Activated CD8-positive, alpha-beta T cell treated with anti-CD3 and anti-CD28 coated beads, Interleukin-2, amount 10 ng/mL, durations not matched to agents 7 days and 5 days (primary cell): ENCODE measurements at regions of chr16 and their contacts with region 1.

Region 1: GRCh38 chr16:84672276-84673202 is 24.2 kb downstream of the KLHL36 start:
- DNase-seq: peak; percentile 84
- ATAC-seq: peak; percentile 94
- H3K4me3 Mint-ChIP-seq: no peak overlapping the region
- H3K27ac Mint-ChIP-seq: no peak overlapping the region
- H3K4me1 Mint-ChIP-seq: peaks cover 10% of the 10 kb centered on the region
- H3K27me3 Mint-ChIP-seq: peaks cover 11% of the 10 kb centered on the region

Region 2: GRCh38 chr16:84647828-84648594 is 24.5 kb before region 1 on chr16 and contains the start of gene KLHL36:
- CTCF ChIA-PET with region 1: interaction called, 16 read pairs
- POLR2A ChIA-PET with region 1: interaction called, 5 read pairs
- DNase-seq: peak; percentile 66
- ATAC-seq: peak; percentile 84
- H3K4me3 Mint-ChIP-seq: peak within 1 kb of the TSS; percentile 72
- H3K27ac Mint-ChIP-seq: peak within 1 kb of the TSS; percentile 71
- H3K4me1 Mint-ChIP-seq: peaks cover 40% of the 10 kb centered on the region
- H3K27me3 Mint-ChIP-seq: peaks cover 19% of the 10 kb centered on the region
- total RNA-seq, gene KLHL36: 31.4 to 32.6 TPM

Region 3: DNA sequence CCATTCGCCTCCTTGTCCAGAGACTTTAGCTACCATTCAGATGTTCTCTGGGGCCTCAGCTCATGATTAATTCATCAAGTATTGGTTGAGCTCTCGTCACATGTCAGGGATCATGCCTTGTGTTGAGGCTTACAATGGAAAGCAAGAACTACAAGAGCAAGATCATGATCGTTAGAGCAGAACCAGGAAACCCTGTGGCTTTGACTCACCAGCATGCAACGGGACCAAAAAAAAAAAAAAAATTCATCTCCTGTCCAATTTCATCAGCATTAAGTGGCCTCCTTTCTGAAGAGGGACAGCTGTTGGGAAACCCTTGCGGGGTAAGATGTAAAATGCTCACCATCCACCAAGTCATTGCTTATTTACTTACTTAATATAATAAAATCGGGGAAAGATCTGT is 15.2 kb after region 1 on chr16:
- CTCF ChIA-PET with region 1: interaction called, 20 read pairs
- POLR2A ChIA-PET with region 1: no interaction called
- DNase-seq: no peak
- ATAC-seq: peak; percentile 27
- H3K4me3 Mint-ChIP-seq: no peak overlapping the region
- H3K27ac Mint-ChIP-seq: no peak overlapping the region
- H3K4me1 Mint-ChIP-seq: peaks cover 16% of the 10 kb centered on the region
- H3K27me3 Mint-ChIP-seq: peaks cover 17% of the 10 kb centered on the region

Region 4: GRCh38 chr16:84699712-84700445 is 27.3 kb after region 1 on chr16 and contains the start of gene USP10:
- CTCF ChIA-PET with region 1: interaction called, 12 read pairs
- POLR2A ChIA-PET with region 1: no interaction called
- DNase-seq: peak; percentile 86
- ATAC-seq: peak; percentile 89
- H3K4me3 Mint-ChIP-seq: peak within 1 kb of the TSS; percentile 98
- H3K27ac Mint-ChIP-seq: peak within 1 kb of the TSS; percentile 93
- H3K4me1 Mint-ChIP-seq: peaks cover 38% of the 10 kb centered on the region
- H3K27me3 Mint-ChIP-seq: no peaks in the 10 kb centered on the region
- total RNA-seq, gene USP10: 82.9 to 88.3 TPM